GM18951 (cell line): ENCODE measurements at regions of chr2 and their contacts with region 1.

Region 1: GRCh38 chr2:37832590-37833197 is 92.4 kb upstream of the RMDN2 start:
- POLR2A ChIP-seq: no peak

Region 2: DNA sequence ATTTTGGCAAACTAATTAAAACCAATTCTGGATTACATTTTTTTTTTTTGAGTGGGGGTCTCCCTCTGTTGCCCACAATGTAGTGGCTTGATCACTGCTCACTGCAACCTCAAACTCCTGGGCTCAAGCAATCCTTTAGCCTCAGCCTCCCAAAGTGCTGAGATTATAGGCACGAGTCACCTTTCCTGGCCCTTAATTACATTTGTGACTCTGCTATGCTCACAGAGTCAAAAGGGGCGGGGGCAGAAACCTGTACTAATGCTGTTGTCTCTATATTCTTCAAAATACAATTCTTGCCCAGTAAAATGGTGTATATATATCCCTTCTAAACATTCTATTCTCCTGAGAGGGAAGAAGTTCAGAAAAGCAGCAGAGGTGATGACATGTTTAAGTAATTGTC is 531.3 kb before region 1 on chr2:
- in situ Hi-C with region 1: no loop called
- POLR2A ChIP-seq: no peak

Region 3: GRCh38 chr2:37389989-37390765 is 442.5 kb before region 1 on chr2:
- in situ Hi-C with region 1: no loop called
- POLR2A ChIP-seq: no peak

Region 4: GRCh38 chr2:37570773-37571586 is 261.7 kb before region 1 on chr2:
- in situ Hi-C with region 1: no loop called
- POLR2A ChIP-seq: no peak

Region 5: DNA sequence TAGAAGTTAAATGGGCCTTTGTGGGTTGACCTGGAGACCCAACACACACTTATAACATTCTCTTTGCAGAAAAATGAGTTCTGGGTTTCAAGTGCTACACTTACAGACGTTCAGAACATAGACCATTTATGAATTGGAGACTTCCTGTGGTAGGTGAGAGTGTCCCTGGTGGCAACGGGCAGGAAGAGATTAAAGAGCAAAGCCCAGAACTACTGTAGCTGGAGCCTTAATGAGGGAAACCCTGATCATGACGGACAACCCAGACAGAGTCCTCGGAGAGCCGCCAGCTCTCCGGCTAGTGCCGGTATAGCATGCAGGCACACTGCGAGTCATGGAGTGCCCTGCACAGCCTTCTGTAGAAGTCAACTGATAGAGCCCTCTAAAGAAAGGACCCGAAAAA is 47.9 kb after region 1 on chr2:
- in situ Hi-C with region 1: loop called (anchors 5 kb)
- POLR2A ChIP-seq: no peak